ENCODE measurements at regions of chr4 and their contacts with region 1.

Region 1: DNA sequence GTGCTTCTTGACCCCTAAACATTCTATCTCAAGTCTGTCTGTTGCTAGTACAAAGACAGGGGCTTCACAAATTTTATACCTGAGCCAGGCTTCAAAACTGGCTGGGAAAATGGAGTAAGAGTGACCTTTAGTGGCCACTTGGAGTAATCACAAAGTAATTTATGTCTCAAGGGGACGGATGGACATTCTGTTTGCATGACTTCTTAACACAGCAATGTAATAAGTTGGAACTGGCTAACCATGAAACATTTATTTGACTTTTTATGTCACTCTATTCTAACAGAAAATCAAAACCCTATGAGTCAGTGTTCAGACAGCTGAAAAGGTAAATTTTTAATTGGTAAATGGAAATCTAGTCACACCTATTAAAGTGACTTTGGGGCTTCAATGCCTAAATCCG is 600.6 kb downstream of the ANKRD50 start:
- DNase-seq: no peak
- H3K4me3 Mint-ChIP-seq: no peak overlapping the region
- H3K27ac Mint-ChIP-seq: no peak overlapping the region
- H3K4me1 Mint-ChIP-seq: no peaks in the 10 kb centered on the region
- H3K27me3 Mint-ChIP-seq: no peaks in the 10 kb centered on the region

Region 2: DNA sequence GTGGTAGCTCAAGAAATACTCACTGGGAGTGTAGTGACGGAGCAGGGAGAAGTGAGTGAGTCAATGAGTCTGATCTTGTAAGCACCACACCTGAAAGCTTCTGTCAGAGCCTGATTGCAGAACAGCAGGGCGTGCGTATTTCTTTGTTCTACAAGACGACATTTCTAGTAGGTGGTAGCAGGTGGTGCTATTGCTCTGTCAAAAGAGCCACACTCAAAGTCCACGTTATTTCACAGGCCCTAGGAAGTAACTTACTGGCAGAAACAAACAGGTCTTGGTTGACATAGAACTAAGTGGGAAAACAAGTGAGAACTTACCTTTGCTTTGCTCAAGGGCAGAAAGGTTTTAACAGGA is 761.8 kb before region 1 on chr4:
- intact Hi-C with region 1: loop called (anchors 10 kb)
- DNase-seq: no peak
- H3K4me3 Mint-ChIP-seq: no peak overlapping the region
- H3K27ac Mint-ChIP-seq: no peak overlapping the region
- H3K4me1 Mint-ChIP-seq: peaks cover 10% of the 10 kb centered on the region
- H3K27me3 Mint-ChIP-seq: peaks cover 22% of the 10 kb centered on the region

Region 3: DNA sequence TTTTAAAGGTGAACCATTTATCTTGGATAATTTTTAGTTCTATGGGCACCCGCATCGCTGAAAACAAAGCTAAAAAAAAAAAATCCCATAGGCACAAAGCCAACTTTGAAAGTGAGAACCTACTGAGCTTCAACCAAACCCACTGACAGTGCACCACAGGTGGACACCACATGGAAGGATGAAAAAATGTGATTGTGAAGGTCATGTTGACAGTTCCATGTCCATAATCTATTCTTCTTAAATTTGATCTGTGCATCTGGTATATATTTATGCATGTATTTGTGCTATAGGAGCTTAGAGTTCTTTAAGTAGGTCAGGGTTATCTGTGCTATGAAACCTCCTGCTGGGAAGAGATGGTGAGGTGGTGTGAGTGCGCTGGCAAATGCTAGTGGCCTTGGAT is 341.0 kb before region 1 on chr4:
- intact Hi-C with region 1: loop called (anchors 5 kb)
- DNase-seq: no peak
- H3K4me3 Mint-ChIP-seq: no peak overlapping the region
- H3K27ac Mint-ChIP-seq: no peak overlapping the region
- H3K4me1 Mint-ChIP-seq: no peaks in the 10 kb centered on the region
- H3K27me3 Mint-ChIP-seq: peaks cover 5% of the 10 kb centered on the region

Measured in activated T-helper 1 cell treated with anti-CD3 and anti-CD28 coated beads, Interleukin-12 subunit alpha, Interleukin-12 subunit beta, Interleukin-2, Interleukin-4 antibody, amounts not matched to agents 30 ng/mL and 10 ng/mL and 1 ng/mL, durations not matched to agents 14 hours and 24 hours and 36 hours (primary cell).